Activated CD8-positive, alpha-beta T cell treated with anti-CD3 and anti-CD28 coated beads for 36 hours (primary cell): ENCODE measurements at regions of chr4 and their contacts with region 1.

Region 1: DNA sequence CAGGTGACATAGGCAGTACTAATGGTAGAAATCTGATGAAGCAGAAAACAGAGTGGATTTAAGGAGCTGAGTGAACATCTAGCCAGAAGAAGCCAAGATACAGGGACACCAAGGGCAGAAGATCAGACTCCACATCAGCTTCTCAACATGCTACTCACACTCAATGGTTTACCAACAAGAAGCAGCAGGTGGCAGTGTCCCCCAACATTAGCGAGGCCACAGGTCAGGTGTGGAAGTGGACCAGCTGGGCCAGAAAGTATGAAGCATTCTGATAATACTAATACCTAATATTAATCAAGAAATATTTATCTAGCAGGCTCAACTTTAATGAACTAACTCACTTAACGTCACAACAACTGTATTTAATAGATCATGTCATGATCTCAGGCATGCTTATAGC is 73.4 kb upstream of the TTC29 start:
- DNase-seq: peak; percentile 72
- ATAC-seq: peak; percentile 56
- H3K4me3 Mint-ChIP-seq: no peak overlapping the region
- H3K27ac Mint-ChIP-seq: no peak overlapping the region
- H3K4me1 Mint-ChIP-seq: no peaks in the 10 kb centered on the region
- H3K27me3 Mint-ChIP-seq: no peaks in the 10 kb centered on the region
- CTCF ChIP-seq: peak; percentile 66

Region 2: DNA sequence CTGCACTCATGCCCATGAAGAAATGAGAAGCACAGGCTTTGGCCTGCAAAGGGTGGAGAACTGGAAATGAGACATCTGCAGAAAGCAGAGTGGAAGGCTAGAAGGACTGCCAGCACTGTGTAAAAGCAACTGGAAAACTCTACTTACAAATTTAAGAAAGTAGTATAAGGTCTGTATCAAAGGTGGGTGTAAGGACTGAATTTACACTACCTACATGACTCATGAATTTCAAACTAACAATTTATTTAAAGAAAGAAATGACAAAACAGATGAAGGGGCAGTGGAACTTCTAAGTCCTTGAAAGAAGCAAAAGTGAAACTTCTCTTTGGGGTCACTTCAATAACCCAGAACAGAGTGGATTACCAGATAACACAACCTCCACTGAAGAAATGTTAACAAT is 568.5 kb before region 1 on chr4:
- CTCF ChIA-PET with region 1: no interaction called
- POLR2A ChIA-PET with region 1: no interaction called
- intact Hi-C with region 1: no loop called
- DNase-seq: peak; percentile 17
- ATAC-seq: peak; percentile 88
- H3K4me3 Mint-ChIP-seq: peak overlapping the region; percentile 53
- H3K27ac Mint-ChIP-seq: peak overlapping the region; percentile 85
- H3K4me1 Mint-ChIP-seq: peaks cover 32% of the 10 kb centered on the region
- H3K27me3 Mint-ChIP-seq: no peaks in the 10 kb centered on the region
- CTCF ChIP-seq: no peak

Region 3: GRCh38 chr4:147006229-147006628 is 12.8 kb before region 1 on chr4:
- CTCF ChIA-PET with region 1: interaction called, 13 read pairs
- POLR2A ChIA-PET with region 1: interaction called, 3 read pairs
- intact Hi-C with region 1: no loop called
- DNase-seq: no peak
- ATAC-seq: no peak
- H3K4me3 Mint-ChIP-seq: no peak overlapping the region
- H3K27ac Mint-ChIP-seq: no peak overlapping the region
- H3K4me1 Mint-ChIP-seq: no peaks in the 10 kb centered on the region
- H3K27me3 Mint-ChIP-seq: peaks cover 2% of the 10 kb centered on the region
- CTCF ChIP-seq: no peak

Region 4: DNA sequence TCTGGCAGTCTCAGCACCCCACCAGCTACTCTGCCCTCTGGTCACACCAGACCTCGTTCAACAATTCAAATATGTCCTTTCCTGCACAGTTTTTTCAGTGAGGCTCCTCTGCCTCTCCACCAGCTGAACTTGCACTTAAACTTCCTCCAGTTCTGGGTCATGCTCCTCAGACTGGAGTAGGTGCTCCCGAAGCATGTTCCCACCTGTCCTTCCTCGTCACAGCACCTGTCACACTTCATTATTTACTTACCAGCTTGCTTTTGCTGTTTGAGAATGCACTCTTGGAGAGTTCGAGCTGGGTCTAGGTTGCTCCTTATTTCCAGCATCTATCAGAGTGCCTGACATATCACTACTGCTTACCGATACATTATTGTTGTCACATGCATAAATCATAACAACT is 71.4 kb after region 1 on chr4:
- CTCF ChIA-PET with region 1: interaction called, 12 read pairs
- POLR2A ChIA-PET with region 1: no interaction called
- intact Hi-C with region 1: no loop called
- DNase-seq: no peak
- ATAC-seq: no peak
- H3K4me3 Mint-ChIP-seq: no peak overlapping the region
- H3K27ac Mint-ChIP-seq: no peak overlapping the region
- H3K4me1 Mint-ChIP-seq: no peaks in the 10 kb centered on the region
- H3K27me3 Mint-ChIP-seq: peaks cover 4% of the 10 kb centered on the region
- CTCF ChIP-seq: no peak